Sigmoid colon (tissue), 7 donors: ENCODE measurements at regions of chr1 and their contacts with region 1.

Region 1: DNA sequence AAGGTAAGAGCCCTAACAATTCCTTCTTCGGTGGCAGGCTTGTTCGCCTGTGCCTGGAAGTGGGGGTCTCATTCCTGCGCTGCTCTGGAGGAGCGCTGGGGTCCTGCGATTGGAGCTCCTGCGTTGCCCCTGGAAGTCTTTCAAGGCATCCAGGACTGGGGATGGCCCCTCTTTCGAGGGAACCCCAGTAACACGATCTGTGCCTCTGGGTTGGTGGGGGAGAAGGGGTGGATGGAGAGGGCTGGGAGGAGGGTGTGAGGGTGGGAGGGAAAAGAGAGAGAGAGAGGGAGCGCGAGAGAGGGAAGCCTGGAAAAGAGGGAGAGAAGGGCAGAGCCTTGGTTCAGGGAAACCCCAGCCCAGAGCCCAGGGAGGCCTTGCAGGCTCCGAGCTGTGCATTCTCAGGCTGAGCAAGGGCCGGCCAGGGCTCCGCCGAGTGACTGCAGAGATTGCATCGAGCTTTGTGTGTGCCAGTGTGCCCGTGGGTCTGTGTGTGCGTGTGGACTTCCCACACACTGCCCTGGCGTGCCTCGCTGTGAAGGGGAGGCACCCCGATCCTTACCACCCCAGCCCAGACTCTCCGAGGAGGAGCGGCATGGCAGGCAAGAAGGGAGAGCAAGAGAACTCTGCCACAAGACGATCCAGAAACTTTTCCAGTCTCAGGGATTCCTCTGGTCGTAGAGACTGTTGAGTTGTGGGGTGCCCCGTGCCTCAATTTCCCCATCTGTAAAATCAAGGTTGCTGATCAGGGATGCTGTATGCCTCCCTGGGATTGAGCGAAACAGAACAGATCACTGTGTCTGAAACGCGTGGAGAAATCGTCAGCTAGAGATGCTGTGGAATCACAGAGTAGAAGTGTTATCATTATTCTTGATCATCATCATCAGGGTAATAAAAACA is 619 bp downstream of the BCL9 start:
- DNase-seq: peak; percentile 85
- H3K4me3 ChIP-seq: peak overlapping the region; percentile 55 to 68 (median 62)
- H3K27ac ChIP-seq: peak overlapping the region; percentile 94 to 97 (median 95)
- H3K4me1 ChIP-seq: peaks cover 0 to 62% (median 44%) of the 10 kb centered on the region in 4 donors
- H3K27me3 ChIP-seq: no peaks in the 10 kb centered on the region
- CTCF ChIP-seq: no peak
- EP300 ChIP-seq: no peak
- POLR2A ChIP-seq: peak in 1 of 2 donors; percentile 15

Region 2: DNA sequence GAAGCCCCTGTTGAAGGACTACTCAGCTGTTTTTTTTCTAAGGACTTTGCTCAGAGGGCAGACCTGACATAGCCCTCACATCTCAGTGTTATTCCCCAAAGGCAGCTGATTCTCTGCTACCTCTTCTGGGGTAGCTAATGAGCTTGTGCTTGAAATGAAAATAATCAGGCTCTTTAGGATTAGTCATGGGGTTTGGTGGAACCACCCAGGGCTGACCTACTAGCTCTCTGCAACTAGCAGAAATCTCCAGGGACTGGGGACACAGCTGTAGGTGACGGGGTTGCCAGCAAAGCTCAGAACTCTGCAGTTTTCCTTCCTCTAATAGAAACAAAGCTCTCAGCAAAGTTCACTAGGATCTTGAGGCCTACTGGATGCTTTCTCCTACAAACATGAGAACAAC is 107.0 kb before region 1 on chr1:
- intact Hi-C with region 1: no loop called
- DNase-seq: no peak
- H3K4me3 ChIP-seq: no peak overlapping the region
- H3K27ac ChIP-seq: no peak overlapping the region
- H3K4me1 ChIP-seq: no peaks in the 10 kb centered on the region
- H3K27me3 ChIP-seq: no peaks in the 10 kb centered on the region
- CTCF ChIP-seq: no peak
- EP300 ChIP-seq: no peak
- POLR2A ChIP-seq: no peak

Region 3: GRCh38 chr1:147472489-147472888 is 69.4 kb before region 1 on chr1:
- intact Hi-C with region 1: no loop called
- DNase-seq: no peak
- H3K4me3 ChIP-seq: no peak overlapping the region
- H3K27ac ChIP-seq: no peak overlapping the region
- H3K4me1 ChIP-seq: no peaks in the 10 kb centered on the region
- H3K27me3 ChIP-seq: no peaks in the 10 kb centered on the region
- CTCF ChIP-seq: no peak
- EP300 ChIP-seq: no peak
- POLR2A ChIP-seq: no peak

Region 4: DNA sequence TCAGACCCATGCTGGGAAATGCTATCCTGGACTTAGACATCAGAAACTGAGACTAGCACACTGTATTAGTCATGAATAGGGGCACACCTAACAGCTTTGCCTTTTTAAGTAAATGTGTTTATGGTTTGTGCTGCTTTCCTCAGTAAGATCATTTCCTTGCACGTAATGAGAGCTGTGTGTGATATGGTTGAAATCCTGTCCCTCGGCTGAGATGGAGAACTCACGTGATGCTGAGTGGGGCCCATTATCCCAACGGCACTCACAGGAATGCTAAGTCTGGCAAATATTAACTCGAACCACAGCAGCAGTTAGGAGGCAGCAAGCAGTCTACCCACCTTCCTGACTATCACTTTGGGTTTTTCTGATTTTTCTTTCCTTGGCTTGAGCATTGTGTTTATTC is 37.6 kb after region 1 on chr1:
- intact Hi-C with region 1: no loop called
- DNase-seq: no peak
- H3K4me3 ChIP-seq: no peak overlapping the region
- H3K27ac ChIP-seq: peak overlapping the region in 1 of 4 donors; percentile 6
- H3K4me1 ChIP-seq: peaks cover 0 to 53% (median 29%) of the 10 kb centered on the region in 4 donors
- H3K27me3 ChIP-seq: no peaks in the 10 kb centered on the region
- CTCF ChIP-seq: no peak
- EP300 ChIP-seq: no peak
- POLR2A ChIP-seq: no peak

Region 5: GRCh38 chr1:147599362-147600118 is 57.6 kb after region 1 on chr1:
- intact Hi-C with region 1: loop called (anchors 1 kb)
- DNase-seq: peak; percentile 99
- H3K4me3 ChIP-seq: peak overlapping the region; percentile 52 to 82 (median 76)
- H3K27ac ChIP-seq: peak overlapping the region; percentile 83 to 96 (median 93)
- H3K4me1 ChIP-seq: peaks cover 0 to 43% (median 29%) of the 10 kb centered on the region in 4 donors
- H3K27me3 ChIP-seq: no peaks in the 10 kb centered on the region
- CTCF ChIP-seq: no peak
- EP300 ChIP-seq: peak in 1 of 4 donors; percentile 23
- POLR2A ChIP-seq: peak; percentile 84 to 91